IMR-90 (cell line): ENCODE measurements at regions of chr6 and their contacts with region 1.

Region 1: DNA sequence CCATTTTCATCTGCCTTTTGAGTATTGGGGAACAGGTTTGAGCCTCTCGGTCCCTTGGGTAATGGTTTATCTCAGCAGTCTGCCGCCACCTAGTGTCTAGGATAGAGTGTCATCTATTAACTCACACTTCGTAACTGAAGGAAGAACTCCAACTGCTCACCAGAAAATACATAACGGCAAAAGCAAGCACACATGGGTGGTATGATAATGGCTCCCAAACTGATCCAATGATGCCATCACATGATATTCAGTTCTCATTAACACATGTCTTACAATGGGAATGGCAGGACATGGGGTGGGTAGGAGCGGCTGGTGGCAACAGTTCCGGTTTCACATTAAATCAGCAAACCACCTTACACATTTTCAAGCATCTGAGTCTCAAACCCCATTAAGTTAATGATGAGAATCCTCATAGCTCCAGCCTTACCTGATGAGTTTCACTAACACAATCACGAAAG is 110.7 kb upstream of the PHACTR1 start:
- DNase-seq: peak; percentile 75
- ATAC-seq: peak; percentile 77
- H3K4me3 ChIP-seq: no peak overlapping the region
- H3K27ac ChIP-seq: no peak overlapping the region
- H3K4me1 ChIP-seq: peaks cover 9% of the 10 kb centered on the region
- H3K27me3 ChIP-seq: no peaks in the 10 kb centered on the region
- CTCF ChIP-seq: peak; percentile 81
- POLR2A ChIP-seq: no peak
- RAD21 ChIP-seq: peak; percentile 88

Region 2: DNA sequence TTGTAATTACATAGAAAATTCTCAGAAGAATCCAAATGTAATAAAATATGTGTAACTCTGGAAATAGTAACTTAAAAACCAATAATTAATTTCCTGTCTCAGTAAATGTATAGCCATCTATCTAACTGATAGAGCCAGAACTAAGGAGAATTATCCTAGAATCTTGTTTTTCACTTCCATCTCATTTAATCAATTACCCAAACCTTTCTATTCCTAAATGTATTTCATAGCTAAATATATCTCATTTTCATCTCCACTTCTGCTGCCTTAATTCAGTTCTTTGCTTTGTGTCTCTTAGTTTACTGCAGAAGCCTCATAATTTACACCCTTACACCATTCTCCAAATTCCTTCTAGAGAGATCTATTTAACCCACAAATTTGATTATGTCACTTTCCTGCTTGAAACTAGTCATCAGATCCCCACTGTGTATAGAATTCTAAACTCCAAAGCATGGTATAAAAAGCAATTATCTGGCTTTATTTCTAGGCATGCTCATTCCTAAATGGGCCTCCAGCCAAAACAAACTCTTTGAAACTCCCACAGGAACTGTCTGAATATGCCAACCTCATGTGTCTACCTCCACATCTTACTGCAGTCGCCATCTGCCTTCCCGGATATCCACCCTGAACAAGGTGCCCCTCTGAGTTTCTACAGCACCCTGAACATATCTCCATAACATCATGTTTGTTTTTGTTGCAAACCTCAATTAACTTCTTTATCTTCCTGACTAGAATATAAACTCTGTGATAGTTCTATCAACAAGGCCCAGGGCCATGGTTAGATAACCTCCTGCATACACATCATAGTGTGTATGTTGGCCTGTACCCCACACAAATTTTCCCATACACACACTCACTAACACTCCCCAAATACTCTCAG is 756.8 kb before region 1 on chr6:
- CTCF ChIA-PET with region 1: no interaction called
- POLR2A ChIA-PET with region 1: no interaction called
- dilution Hi-C with region 1: no loop called
- in situ Hi-C with region 1: no loop called
- intact Hi-C with region 1: no loop called
- DNase-seq: peak; percentile 42
- ATAC-seq: peak; percentile 30
- H3K4me3 ChIP-seq: no peak overlapping the region
- H3K27ac ChIP-seq: no peak overlapping the region
- H3K4me1 ChIP-seq: peaks cover 11% of the 10 kb centered on the region
- H3K27me3 ChIP-seq: no peaks in the 10 kb centered on the region
- CTCF ChIP-seq: no peak
- POLR2A ChIP-seq: no peak
- RAD21 ChIP-seq: no peak

Region 3: GRCh38 chr6:12147557-12148316 is 458.2 kb before region 1 on chr6:
- CTCF ChIA-PET with region 1: no interaction called
- POLR2A ChIA-PET with region 1: no interaction called
- dilution Hi-C with region 1: no loop called
- in situ Hi-C with region 1: no loop called
- intact Hi-C with region 1: loop called (anchors 5 kb)
- DNase-seq: peak; percentile 37
- ATAC-seq: peak; percentile 36
- H3K4me3 ChIP-seq: no peak overlapping the region
- H3K27ac ChIP-seq: peak overlapping the region; percentile 51; the same call in 1 of the 2 replicates
- H3K4me1 ChIP-seq: peaks cover 12% of the 10 kb centered on the region
- H3K27me3 ChIP-seq: no peaks in the 10 kb centered on the region
- CTCF ChIP-seq: peak; percentile 30; the same call in 1 of the 2 replicates
- POLR2A ChIP-seq: no peak
- RAD21 ChIP-seq: peak; percentile 18; the same call in 1 of the 2 replicates

Region 4: DNA sequence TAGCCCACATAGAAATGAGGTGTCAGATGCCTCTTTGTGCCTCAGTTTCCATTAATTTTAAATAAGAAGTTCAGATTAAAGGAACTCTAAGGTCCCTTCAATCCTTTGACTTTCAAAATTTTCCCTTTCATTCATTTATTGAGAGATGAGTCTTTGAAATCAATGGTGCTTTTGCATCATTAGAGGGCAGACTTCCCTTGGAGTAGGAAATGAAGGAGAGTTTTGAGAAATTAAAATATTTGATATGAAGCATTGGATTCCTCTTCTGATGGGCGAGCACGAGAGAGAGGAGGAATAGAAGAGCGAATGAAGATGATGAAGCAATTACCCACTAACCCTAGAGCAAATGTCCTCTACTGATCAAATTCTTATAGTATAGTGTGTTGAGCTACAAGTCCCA is 210.0 kb before region 1 on chr6:
- CTCF ChIA-PET with region 1: interaction called, 3 read pairs
- POLR2A ChIA-PET with region 1: no interaction called
- dilution Hi-C with region 1: no loop called
- in situ Hi-C with region 1: no loop called
- intact Hi-C with region 1: loop called (anchors 1 kb)
- DNase-seq: no peak
- ATAC-seq: no peak
- H3K4me3 ChIP-seq: no peak overlapping the region
- H3K27ac ChIP-seq: no peak overlapping the region
- H3K4me1 ChIP-seq: no peaks in the 10 kb centered on the region
- H3K27me3 ChIP-seq: no peaks in the 10 kb centered on the region
- CTCF ChIP-seq: peak; percentile 51
- POLR2A ChIP-seq: no peak
- RAD21 ChIP-seq: peak; percentile 58

Region 5: GRCh38 chr6:12483712-12484111 is 122.2 kb before region 1 on chr6:
- CTCF ChIA-PET with region 1: interaction called, 9 read pairs
- POLR2A ChIA-PET with region 1: no interaction called
- dilution Hi-C with region 1: no loop called
- in situ Hi-C with region 1: no loop called
- intact Hi-C with region 1: loop called (anchors 5 kb)
- DNase-seq: peak; percentile 99
- ATAC-seq: peak; percentile 87
- H3K4me3 ChIP-seq: peak overlapping the region; percentile 37; the same call in 1 of the 2 replicates
- H3K27ac ChIP-seq: peak overlapping the region; percentile 21
- H3K4me1 ChIP-seq: peaks cover 8% of the 10 kb centered on the region
- H3K27me3 ChIP-seq: no peaks in the 10 kb centered on the region
- CTCF ChIP-seq: no peak
- POLR2A ChIP-seq: no peak
- RAD21 ChIP-seq: no peak